Activated CD4-positive, alpha-beta memory T cell treated with anti-CD3 and anti-CD28 coated beads for 36 hours (primary cell): ENCODE measurements at regions of chr7 and their contacts with region 1.

Region 1: DNA sequence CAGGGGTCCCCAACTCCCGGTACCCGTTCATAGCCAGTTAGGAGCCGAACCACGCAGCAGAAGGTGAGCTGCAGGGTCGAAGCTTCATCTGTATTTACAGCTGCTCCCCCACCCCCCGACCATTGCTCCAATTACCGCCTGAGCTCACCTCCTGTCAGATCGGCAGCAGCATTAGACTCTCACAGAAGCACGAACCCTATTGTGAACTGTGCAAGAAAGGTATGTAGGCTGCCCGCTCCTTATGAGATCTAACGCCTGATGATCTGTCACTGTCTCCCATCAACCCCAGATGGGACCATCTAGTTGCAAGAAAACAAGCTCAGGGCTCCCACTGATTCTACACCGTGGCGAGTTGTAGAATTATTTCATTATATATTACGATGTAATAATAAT is 14.6 kb upstream of the AZGP1 start:
- DNase-seq: no peak
- H3K4me3 Mint-ChIP-seq: no peak overlapping the region
- H3K27ac Mint-ChIP-seq: no peak overlapping the region
- H3K4me1 Mint-ChIP-seq: no peaks in the 10 kb centered on the region
- H3K27me3 Mint-ChIP-seq: no peaks in the 10 kb centered on the region

Region 2: GRCh38 chr7:99910976-99911375 is 79.5 kb before region 1 on chr7:
- CTCF ChIA-PET with region 1: interaction called, 148 read pairs
- POLR2A ChIA-PET with region 1: interaction called, 3 read pairs
- intact Hi-C with region 1: loop called (anchors 1 kb)
- DNase-seq: no peak
- H3K4me3 Mint-ChIP-seq: no peak overlapping the region
- H3K27ac Mint-ChIP-seq: no peak overlapping the region
- H3K4me1 Mint-ChIP-seq: peaks cover 40% of the 10 kb centered on the region
- H3K27me3 Mint-ChIP-seq: no peaks in the 10 kb centered on the region

Region 3: GRCh38 chr7:99975782-99976521 is 14.5 kb before region 1 on chr7 and contains the start of gene AZGP1:
- CTCF ChIA-PET with region 1: interaction called, 44 read pairs
- POLR2A ChIA-PET with region 1: no interaction called
- intact Hi-C with region 1: no loop called
- DNase-seq: no peak
- H3K4me3 Mint-ChIP-seq: no peak within 1 kb of the TSS
- H3K27ac Mint-ChIP-seq: no peak within 1 kb of the TSS
- H3K4me1 Mint-ChIP-seq: no peaks in the 10 kb centered on the region
- H3K27me3 Mint-ChIP-seq: no peaks in the 10 kb centered on the region
- total RNA-seq, gene AZGP1: not detected

Region 4: DNA sequence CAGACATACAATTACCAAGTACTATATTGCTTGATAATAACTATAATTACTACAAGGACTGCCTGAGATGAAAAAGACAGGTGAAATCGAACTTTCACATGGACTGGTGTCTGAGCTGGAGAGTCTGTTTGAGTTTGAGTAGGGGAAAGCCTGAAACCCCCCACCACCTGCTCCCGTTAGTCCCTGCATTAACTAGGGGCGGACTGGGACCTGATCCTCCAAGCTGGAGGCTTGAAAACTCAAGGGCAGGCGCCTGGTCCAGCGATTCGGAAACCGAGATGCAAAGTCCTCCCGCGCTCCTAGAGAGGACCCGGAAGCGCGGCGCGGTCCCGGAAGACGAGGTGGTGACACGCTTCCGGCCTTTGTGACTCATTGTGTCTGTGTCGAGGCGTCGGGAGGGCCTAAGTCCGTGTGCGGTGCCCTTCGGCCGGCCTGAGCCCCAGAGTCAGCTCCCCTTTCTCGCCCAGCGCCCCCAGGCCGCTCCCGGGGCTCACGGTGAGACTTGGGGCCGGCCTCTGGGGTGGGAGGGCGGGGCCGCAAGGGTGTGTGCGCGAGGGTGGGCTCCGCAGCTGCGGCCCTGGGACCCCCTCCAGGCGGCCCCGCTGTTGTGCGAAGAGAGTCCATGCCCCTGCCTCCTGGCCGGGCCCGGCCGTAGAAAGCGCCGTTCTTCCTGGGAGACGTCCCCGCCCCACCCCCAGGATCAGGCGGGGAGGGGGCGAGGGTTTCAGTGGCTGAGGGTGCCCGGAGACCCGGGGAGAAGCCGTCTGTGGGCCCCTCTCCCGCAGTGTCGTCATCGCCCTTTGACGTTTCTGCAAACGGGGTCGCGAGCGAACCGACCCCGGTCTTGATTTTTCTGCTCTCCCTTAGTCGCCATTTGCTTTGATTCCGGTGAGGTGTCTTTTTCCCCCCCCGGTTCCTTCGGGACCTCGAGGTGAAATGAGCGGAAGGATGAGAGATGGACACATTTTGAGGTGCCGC is 25.1 kb after region 1 on chr7 and contains the start of gene ZKSCAN1:
- CTCF ChIA-PET with region 1: interaction called, 14 read pairs
- POLR2A ChIA-PET with region 1: no interaction called
- intact Hi-C with region 1: no loop called
- DNase-seq: peak; percentile 91
- H3K4me3 Mint-ChIP-seq: peak within 1 kb of the TSS; percentile 92
- H3K27ac Mint-ChIP-seq: peak within 1 kb of the TSS; percentile 94
- H3K4me1 Mint-ChIP-seq: peaks cover 47% of the 10 kb centered on the region
- H3K27me3 Mint-ChIP-seq: no peaks in the 10 kb centered on the region
- total RNA-seq, gene ZKSCAN1: 49.1 to 50.6 TPM

Region 5: GRCh38 chr7:100081535-100082102 is 91.2 kb after region 1 on chr7 and contains the start of gene ZNF3:
- CTCF ChIA-PET with region 1: interaction called, 3 read pairs
- POLR2A ChIA-PET with region 1: no interaction called
- intact Hi-C with region 1: loop called (anchors 2 kb)
- DNase-seq: peak; percentile 99
- H3K4me3 Mint-ChIP-seq: peak within 1 kb of the TSS; percentile 83
- H3K27ac Mint-ChIP-seq: peak within 1 kb of the TSS; percentile 85
- H3K4me1 Mint-ChIP-seq: peaks cover 29% of the 10 kb centered on the region
- H3K27me3 Mint-ChIP-seq: no peaks in the 10 kb centered on the region
- total RNA-seq, gene ZNF3: 18.0 to 18.6 TPM